Mammary epithelial cell (primary cell): ENCODE measurements at regions of chr6 and their contacts with region 1.

Region 1: GRCh38 chr6:142474531-142475289 is 172.9 kb downstream of the ADGRG6 start:
- DNase-seq: peak; percentile 68
- H3K4me3 ChIP-seq: peak overlapping the region in 1 of 3 experiments; percentile 32
- H3K27ac ChIP-seq: no peak overlapping the region
- H3K4me1 ChIP-seq: peaks cover 3% of the 10 kb centered on the region
- H3K27me3 ChIP-seq: no peaks in the 10 kb centered on the region
- CTCF ChIP-seq: peak; percentile 63 to 65

Region 2: DNA sequence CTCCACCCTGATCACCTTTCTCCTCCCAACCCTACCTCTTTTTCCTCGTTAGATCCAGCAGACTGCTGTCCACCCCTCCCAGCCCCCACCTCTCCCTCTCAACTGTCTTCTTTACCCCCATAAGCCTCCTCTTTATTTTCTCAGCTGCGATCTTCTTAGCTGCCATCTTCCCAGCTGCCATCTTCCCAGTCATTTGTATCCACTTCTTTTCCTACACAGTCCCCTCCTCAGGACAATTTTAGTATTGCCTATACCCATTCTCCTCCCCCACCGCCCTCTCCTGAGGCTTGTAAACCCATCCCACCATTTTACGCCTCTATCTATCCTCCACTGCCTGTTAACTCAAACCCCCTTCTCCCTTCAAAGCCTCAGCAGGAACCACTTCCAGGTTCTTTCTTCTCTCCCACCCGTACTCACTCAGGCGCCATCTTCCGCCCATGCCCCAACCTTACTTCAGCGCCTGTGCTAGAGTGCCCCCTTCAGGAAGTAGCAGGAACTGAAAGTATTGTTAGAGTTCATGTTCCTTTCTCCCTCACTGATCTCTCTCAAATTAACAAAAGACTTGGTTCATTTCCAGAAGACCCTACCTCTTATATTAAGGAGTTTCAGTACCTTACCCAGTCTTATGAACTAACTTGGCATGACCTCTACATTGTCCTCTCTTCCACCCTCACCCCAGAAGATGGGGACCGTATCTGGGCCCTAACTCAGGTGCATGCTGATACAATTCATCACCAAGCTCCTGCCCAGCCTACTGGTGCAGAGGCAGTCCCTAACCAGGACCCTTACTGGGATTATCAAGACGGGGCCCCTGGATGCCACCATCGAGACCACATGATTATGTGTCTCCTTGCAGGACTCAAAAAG is 63.1 kb after region 1 on chr6:
- CTCF ChIA-PET with region 1: interaction called, 3 read pairs
- dilution Hi-C with region 1: no loop called
- in situ Hi-C with region 1: loop called (anchors 5 to 10 kb)
- intact Hi-C with region 1: loop called (anchors 1 kb)
- DNase-seq: peak; percentile 18
- H3K4me3 ChIP-seq: no peak overlapping the region
- H3K27ac ChIP-seq: no peak overlapping the region
- H3K4me1 ChIP-seq: peaks cover 8% of the 10 kb centered on the region
- H3K27me3 ChIP-seq: no peaks in the 10 kb centered on the region
- CTCF ChIP-seq: peak; percentile 67 to 79

Region 3: GRCh38 chr6:142566628-142567396 is 92.1 kb after region 1 on chr6:
- CTCF ChIA-PET with region 1: no interaction called
- dilution Hi-C with region 1: no loop called
- in situ Hi-C with region 1: no loop called
- intact Hi-C with region 1: loop called (anchors 1 kb)
- DNase-seq: peak; percentile 52
- H3K4me3 ChIP-seq: no peak overlapping the region
- H3K27ac ChIP-seq: no peak overlapping the region
- H3K4me1 ChIP-seq: peaks cover 35% of the 10 kb centered on the region
- H3K27me3 ChIP-seq: no peaks in the 10 kb centered on the region
- CTCF ChIP-seq: peak; percentile 95 to 99

Region 4: DNA sequence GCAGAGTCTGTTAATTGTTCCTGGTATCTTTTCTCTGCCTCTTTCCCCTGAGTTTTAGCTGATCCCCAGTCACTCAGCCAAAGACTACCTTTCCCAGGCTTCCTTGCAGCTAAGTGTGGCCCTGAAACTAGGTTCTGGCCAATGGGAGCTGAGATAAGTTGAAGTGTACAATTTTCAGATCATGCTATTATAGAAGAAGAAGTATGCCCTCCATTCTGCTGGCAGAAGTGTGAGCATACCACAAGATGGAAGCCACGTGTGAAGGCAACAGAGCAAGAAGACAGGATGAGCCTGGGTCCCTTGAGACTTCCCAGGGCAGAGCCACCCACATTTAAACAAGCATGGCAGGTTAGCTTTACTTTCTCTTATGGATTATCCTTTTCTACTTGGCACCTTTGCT is 197.1 kb after region 1 on chr6:
- CTCF ChIA-PET with region 1: no interaction called
- dilution Hi-C with region 1: no loop called
- in situ Hi-C with region 1: loop called in 1 of 2 experiments (anchors 25 kb)
- intact Hi-C with region 1: no loop called
- DNase-seq: no peak
- H3K4me3 ChIP-seq: no peak overlapping the region
- H3K27ac ChIP-seq: no peak overlapping the region
- H3K4me1 ChIP-seq: no peaks in the 10 kb centered on the region
- H3K27me3 ChIP-seq: peaks cover 3% of the 10 kb centered on the region
- CTCF ChIP-seq: no peak

Region 5: DNA sequence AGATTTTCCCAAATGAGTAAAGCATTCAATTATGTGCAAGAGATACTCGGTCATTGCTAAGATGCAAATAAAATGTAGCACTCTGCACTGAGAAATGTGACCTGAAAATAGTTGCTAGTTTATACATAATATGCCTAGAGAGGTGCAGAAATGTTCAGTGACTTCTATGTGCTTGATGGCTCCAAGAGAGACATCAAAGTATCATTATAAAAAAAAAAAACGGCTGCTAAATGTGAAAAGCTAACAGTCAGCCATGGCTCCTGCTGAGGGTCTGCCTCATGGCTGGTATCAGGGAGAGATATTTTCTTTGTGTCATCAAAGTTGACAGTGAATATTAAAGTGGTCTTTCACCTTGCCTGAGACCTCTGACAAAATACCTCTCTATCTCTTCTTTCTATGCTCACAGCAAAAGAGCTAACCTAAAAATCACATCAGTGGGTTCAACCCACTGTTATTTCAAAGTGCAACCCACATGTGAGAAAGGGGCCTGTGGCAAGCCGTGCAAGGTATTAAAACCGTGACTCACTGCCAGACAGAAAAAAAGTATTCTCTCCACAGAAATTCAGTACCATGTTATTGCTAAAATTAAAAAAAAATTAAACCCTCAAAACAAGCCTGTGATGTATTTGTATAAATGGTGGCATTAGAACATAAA is 211.3 kb after region 1 on chr6:
- CTCF ChIA-PET with region 1: no interaction called
- dilution Hi-C with region 1: no loop called
- in situ Hi-C with region 1: no loop called
- intact Hi-C with region 1: loop called (anchors 2 kb)
- DNase-seq: no peak
- H3K4me3 ChIP-seq: no peak overlapping the region
- H3K27ac ChIP-seq: no peak overlapping the region
- H3K4me1 ChIP-seq: peaks cover 26% of the 10 kb centered on the region
- H3K27me3 ChIP-seq: no peaks in the 10 kb centered on the region
- CTCF ChIP-seq: no peak